ENCODE measurements at regions of chr13 and their contacts with region 1.

Region 1: GRCh38 chr13:25901460-25902376 is 150.1 kb downstream of the SHISA2 start:
- DNase-seq: peak; percentile 76 to 89 (median 84)
- H3K4me3 ChIP-seq: peak overlapping the region in 1 of 2 donors; percentile 2
- H3K4me3 Mint-ChIP-seq: peak overlapping the region in 4 of 8 donors; percentile 19 to 50 (median 38)
- H3K27ac ChIP-seq: peak overlapping the region; percentile 61
- H3K27ac Mint-ChIP-seq: peak overlapping the region in 1 of 7 donors; percentile 91
- H3K4me1 ChIP-seq: peaks cover 71% of the 10 kb centered on the region
- H3K4me1 Mint-ChIP-seq: peaks cover 0 to 26% (median 24%) of the 10 kb centered on the region in 4 donors
- H3K27me3 ChIP-seq: no peaks in the 10 kb centered on the region
- H3K27me3 Mint-ChIP-seq: no peaks in the 10 kb centered on the region

Region 2: GRCh38 chr13:25847145-25847544 is 54.6 kb before region 1 on chr13:
- CTCF ChIA-PET with region 1: no interaction called
- POLR2A ChIA-PET with region 1: interaction called, 10 read pairs
- intact Hi-C with region 1: loop called (anchors 1 kb)
- DNase-seq: peak; percentile 45 to 71 (median 55)
- H3K4me3 ChIP-seq: peak overlapping the region; percentile 17 to 32
- H3K4me3 Mint-ChIP-seq: peak overlapping the region; percentile 49 to 85 (median 72)
- H3K27ac ChIP-seq: peak overlapping the region; percentile 28
- H3K27ac Mint-ChIP-seq: peak overlapping the region; percentile 74 to 91 (median 89)
- H3K4me1 ChIP-seq: peaks cover 26% of the 10 kb centered on the region
- H3K4me1 Mint-ChIP-seq: peaks cover 21 to 46% (median 32%) of the 10 kb centered on the region in 4 donors
- H3K27me3 ChIP-seq: no peaks in the 10 kb centered on the region
- H3K27me3 Mint-ChIP-seq: peaks cover 0 to 3% of the 10 kb centered on the region in 2 donors

Region 3: DNA sequence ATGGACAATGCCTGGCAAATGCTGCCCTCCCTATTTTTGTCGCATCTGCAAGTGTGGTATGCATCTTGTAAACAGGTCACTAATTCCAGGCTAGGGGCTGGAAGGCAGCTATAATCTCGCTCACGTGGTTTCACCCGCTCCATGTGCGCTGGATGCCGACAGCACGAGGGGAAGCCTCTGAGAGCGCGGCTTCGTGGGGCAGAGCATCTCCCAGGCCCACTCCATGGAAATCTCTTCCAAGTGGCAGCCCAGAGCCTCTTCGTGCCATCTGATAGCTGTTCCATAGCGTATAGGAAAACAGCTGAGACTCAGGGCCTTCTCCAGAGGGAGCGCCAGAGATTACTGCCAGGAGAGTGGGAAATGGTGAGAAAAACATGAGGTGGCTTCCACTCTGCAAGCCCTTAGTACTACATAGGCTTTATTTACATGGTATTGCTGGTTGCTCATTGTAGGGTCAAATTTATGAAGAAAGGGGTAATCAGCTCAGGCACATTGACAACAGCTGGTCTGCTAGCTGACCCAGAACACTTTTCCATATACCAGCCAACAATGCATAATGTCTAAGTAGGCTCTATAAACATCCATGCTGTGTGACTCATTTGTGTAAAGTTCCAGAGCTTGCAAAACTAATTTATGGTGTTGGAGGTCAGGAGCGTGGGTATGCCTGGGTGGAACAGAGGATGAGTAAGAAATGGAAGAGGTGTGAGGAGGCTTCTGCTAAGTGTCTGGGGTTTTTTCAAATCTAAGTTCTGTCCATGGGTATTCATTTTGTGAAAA is 15.1 kb before region 1 on chr13:
- CTCF ChIA-PET with region 1: interaction called, 4 read pairs
- POLR2A ChIA-PET with region 1: interaction called, 10 read pairs
- intact Hi-C with region 1: loop called (anchors 2 kb)
- DNase-seq: no peak
- H3K4me3 ChIP-seq: no peak overlapping the region
- H3K4me3 Mint-ChIP-seq: no peak overlapping the region
- H3K27ac ChIP-seq: no peak overlapping the region
- H3K27ac Mint-ChIP-seq: peak overlapping the region; percentile 51 to 98 (median 78)
- H3K4me1 ChIP-seq: peaks cover 28% of the 10 kb centered on the region
- H3K4me1 Mint-ChIP-seq: peaks cover 17 to 48% (median 33%) of the 10 kb centered on the region in 4 donors
- H3K27me3 ChIP-seq: no peaks in the 10 kb centered on the region
- H3K27me3 Mint-ChIP-seq: no peaks in the 10 kb centered on the region

Region 4: DNA sequence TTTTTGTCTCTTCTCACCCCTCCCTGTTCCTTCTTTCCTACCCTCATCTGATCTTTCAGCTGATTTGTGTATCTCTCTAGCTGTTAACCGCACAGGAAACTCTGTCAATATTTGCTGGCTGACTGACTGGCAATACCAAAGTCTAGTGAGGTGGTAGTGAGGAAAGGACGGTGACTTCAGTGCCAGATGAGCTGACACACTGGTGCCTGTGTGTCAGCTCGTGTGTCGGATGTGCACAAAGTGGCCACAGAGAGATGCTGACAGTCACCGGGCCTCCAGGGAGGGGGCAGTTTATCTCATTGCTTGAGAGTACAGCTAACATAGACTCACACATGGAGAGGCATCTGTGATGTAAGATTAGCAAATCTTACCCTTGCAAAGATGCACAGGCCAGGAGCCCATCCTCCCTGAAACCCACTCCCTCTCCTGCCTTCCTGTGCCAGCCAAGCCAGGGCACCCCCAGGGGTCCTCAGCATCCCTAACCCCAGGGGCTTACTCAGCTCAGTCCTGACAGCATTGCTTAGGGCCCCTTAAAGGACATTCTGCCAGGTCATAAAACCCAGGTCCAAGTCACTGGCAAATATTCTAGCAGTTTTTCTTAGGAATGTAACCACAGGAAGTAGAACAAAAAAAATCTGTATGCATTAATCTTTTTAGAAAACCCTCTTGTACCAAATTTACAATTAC is 69.9 kb after region 1 on chr13:
- CTCF ChIA-PET with region 1: interaction called, 3 read pairs
- POLR2A ChIA-PET with region 1: interaction called, 15 read pairs
- intact Hi-C with region 1: loop called (anchors 1 kb)
- DNase-seq: peak; percentile 39 to 81 (median 50)
- H3K4me3 ChIP-seq: no peak overlapping the region
- H3K4me3 Mint-ChIP-seq: peak overlapping the region; percentile 12 to 79 (median 48)
- H3K27ac ChIP-seq: peak overlapping the region; percentile 14
- H3K27ac Mint-ChIP-seq: peak overlapping the region; percentile 61 to 97 (median 85)
- H3K4me1 ChIP-seq: peaks cover 50% of the 10 kb centered on the region
- H3K4me1 Mint-ChIP-seq: peaks cover 43 to 66% (median 53%) of the 10 kb centered on the region in 4 donors
- H3K27me3 ChIP-seq: no peaks in the 10 kb centered on the region
- H3K27me3 Mint-ChIP-seq: no peaks in the 10 kb centered on the region

Region 5: DNA sequence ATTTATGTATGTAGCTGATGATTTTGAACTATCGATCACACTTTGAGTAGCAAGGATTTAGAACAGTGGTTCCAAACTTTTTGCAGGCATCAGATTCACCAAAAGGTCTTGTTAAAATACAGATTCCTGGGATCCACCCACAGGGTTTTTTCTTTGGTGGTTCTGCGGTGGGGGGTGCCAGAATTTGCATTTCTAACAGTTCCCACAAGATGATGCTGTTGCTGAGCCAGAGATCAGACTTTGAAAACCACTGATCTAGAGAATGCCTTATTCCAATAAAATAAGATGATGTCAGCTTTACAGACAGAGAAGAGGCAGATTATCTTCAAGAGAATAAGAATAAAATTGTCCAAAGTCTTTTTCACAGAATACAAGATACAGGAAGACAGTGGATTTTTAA is 231.0 kb after region 1 on chr13:
- CTCF ChIA-PET with region 1: no interaction called
- POLR2A ChIA-PET with region 1: no interaction called
- intact Hi-C with region 1: no loop called
- DNase-seq: peak in 1 of 5 donors; percentile 1
- H3K4me3 ChIP-seq: no peak overlapping the region
- H3K4me3 Mint-ChIP-seq: no peak overlapping the region
- H3K27ac ChIP-seq: no peak overlapping the region
- H3K27ac Mint-ChIP-seq: no peak overlapping the region
- H3K4me1 ChIP-seq: no peaks in the 10 kb centered on the region
- H3K4me1 Mint-ChIP-seq: peaks cover 0 to 1% (median 0%) of the 10 kb centered on the region in 4 donors
- H3K27me3 ChIP-seq: no peaks in the 10 kb centered on the region
- H3K27me3 Mint-ChIP-seq: peaks cover 5 to 9% of the 10 kb centered on the region in 2 donors

Region 6: DNA sequence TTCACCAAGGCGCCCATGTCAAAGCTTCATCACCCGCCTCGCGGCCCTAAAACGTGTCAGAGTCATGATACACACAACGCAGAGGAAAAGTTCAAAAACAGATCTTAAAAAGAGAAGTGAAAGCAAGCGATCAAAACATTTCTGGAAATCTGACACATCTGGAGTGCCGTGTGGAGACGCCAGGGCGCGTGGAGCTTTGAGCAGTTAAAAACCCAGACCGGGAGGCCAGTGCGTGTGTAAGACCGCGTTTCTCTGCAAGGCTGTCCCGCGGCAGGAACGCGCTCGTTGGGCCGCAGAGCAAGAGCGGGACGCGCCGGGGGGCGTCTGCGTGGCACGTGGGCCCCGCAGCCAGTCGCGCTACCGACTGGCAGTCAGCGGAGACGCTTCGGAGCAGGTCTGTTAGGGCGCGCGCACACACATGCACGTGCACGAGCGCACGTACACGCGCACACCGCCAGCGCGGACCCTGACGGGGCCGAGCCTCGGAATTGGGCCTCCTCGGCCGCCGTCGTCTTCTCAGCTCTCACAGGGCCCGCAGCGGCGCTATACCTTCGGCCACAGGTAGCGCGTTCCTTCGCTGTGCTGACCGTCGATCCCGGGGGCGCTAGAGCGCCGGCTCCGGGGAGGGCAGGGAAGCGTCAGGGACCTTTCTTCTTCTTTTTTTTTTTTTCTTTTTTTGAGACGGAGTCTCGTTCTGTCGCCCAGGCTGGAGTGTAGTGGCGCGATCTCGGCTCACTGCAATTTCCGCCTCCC is 284.6 kb after region 1 on chr13:
- CTCF ChIA-PET with region 1: no interaction called
- POLR2A ChIA-PET with region 1: no interaction called
- intact Hi-C with region 1: no loop called
- DNase-seq: peak; percentile 88 to 93 (median 91)
- H3K4me3 ChIP-seq: peak overlapping the region; percentile 80 to 82
- H3K4me3 Mint-ChIP-seq: peak overlapping the region; percentile 89 to 99 (median 94)
- H3K27ac ChIP-seq: peak overlapping the region; percentile 60
- H3K27ac Mint-ChIP-seq: peak overlapping the region; percentile 91 to 98 (median 96)
- H3K4me1 ChIP-seq: peaks cover 18% of the 10 kb centered on the region
- H3K4me1 Mint-ChIP-seq: peaks cover 12 to 33% (median 27%) of the 10 kb centered on the region in 4 donors
- H3K27me3 ChIP-seq: no peaks in the 10 kb centered on the region
- H3K27me3 Mint-ChIP-seq: no peaks in the 10 kb centered on the region

Region 7: GRCh38 chr13:26253787-26254582 is 352.3 kb after region 1 on chr13 and contains the start of gene CDK8:
- CTCF ChIA-PET with region 1: no interaction called
- POLR2A ChIA-PET with region 1: no interaction called
- intact Hi-C with region 1: loop called (anchors 5 kb)
- DNase-seq: peak; percentile 91 to 95 (median 92)
- H3K4me3 ChIP-seq: peak within 1 kb of the TSS; percentile 55 to 87
- H3K4me3 Mint-ChIP-seq: peak within 1 kb of the TSS; percentile 91 to 100 (median 94)
- H3K27ac ChIP-seq: peak within 1 kb of the TSS; percentile 58
- H3K27ac Mint-ChIP-seq: peak within 1 kb of the TSS; percentile 86 to 99 (median 93)
- H3K4me1 ChIP-seq: peaks cover 18% of the 10 kb centered on the region
- H3K4me1 Mint-ChIP-seq: peaks cover 29 to 44% (median 30%) of the 10 kb centered on the region in 4 donors
- H3K27me3 ChIP-seq: no peaks in the 10 kb centered on the region
- H3K27me3 Mint-ChIP-seq: peaks cover 0 to 1% of the 10 kb centered on the region in 2 donors
- total RNA-seq, gene CDK8: 10.4 to 11.7 TPM

Region 8: GRCh38 chr13:26272621-26273020 is 370.9 kb after region 1 on chr13:
- CTCF ChIA-PET with region 1: no interaction called
- POLR2A ChIA-PET with region 1: no interaction called
- intact Hi-C with region 1: no loop called
- DNase-seq: no peak
- H3K4me3 ChIP-seq: no peak overlapping the region
- H3K4me3 Mint-ChIP-seq: no peak overlapping the region
- H3K27ac ChIP-seq: no peak overlapping the region
- H3K27ac Mint-ChIP-seq: peak overlapping the region in 1 of 7 donors; percentile 57
- H3K4me1 ChIP-seq: peaks cover 5% of the 10 kb centered on the region
- H3K4me1 Mint-ChIP-seq: peaks cover 22 to 45% (median 25%) of the 10 kb centered on the region in 4 donors
- H3K27me3 ChIP-seq: no peaks in the 10 kb centered on the region
- H3K27me3 Mint-ChIP-seq: no peaks in the 10 kb centered on the region